ENCODE measurements at regions of chr3 and their contacts with region 1.

Region 1: GRCh38 chr3:187139126-187139894 is at the start of gene RPL39L:
- DNase-seq: peak; percentile 78 to 85
- ATAC-seq: peak; percentile 96 to 99 (median 98)
- H3K4me3 ChIP-seq: peak within 1 kb of the TSS; percentile 40 to 68 (median 62)
- H3K27ac ChIP-seq: peak within 1 kb of the TSS in 7 of 10 donors; percentile 21 to 73 (median 56)
- H3K4me1 ChIP-seq: peaks cover 0 to 18% (median 6%) of the 10 kb centered on the region in 9 donors
- H3K27me3 ChIP-seq: no peaks in the 10 kb centered on the region
- CTCF ChIP-seq: peak; percentile 78 to 93 (median 89)
- total RNA-seq, gene RPL39L: 3.5 to 7.4 (median 5.6) TPM

Region 2: GRCh38 chr3:186640473-186640818 is 498.9 kb before region 1 on chr3:
- intact Hi-C with region 1: loop called in 1 of 10 experiments (anchors 10 kb)
- DNase-seq: no peak
- ATAC-seq: peak in 5 of 8 donors; percentile 37 to 66 (median 48)
- H3K4me3 ChIP-seq: no peak overlapping the region
- H3K27ac ChIP-seq: no peak overlapping the region
- H3K4me1 ChIP-seq: peaks cover 0 to 19% (median 7%) of the 10 kb centered on the region in 9 donors
- H3K27me3 ChIP-seq: peaks cover 0 to 3% (median 0%) of the 10 kb centered on the region in 7 donors
- CTCF ChIP-seq: no peak

Region 3: DNA sequence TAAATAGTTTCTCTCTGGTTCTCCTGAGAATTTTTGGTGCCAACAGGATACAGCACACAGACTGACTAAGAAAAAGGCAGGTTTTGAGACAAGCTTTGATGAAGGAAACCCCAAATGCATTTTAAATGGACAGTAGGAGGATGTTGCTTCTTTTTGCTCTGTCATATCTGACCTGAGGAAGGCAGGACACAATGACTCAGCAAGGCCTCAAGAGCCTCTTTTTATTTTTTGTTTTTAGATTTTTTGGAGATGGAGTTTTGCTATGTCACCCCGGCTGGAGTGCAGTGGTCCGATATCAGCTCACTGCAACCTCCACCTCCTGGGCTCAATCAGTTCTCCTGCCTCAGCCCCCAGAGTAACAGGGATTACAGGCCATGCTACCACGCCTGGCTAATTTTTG is 439.0 kb before region 1 on chr3:
- intact Hi-C with region 1: no loop called
- DNase-seq: no peak
- ATAC-seq: no peak
- H3K4me3 ChIP-seq: no peak overlapping the region
- H3K27ac ChIP-seq: no peak overlapping the region
- H3K4me1 ChIP-seq: peaks cover 0 to 30% (median 0%) of the 10 kb centered on the region in 9 donors
- H3K27me3 ChIP-seq: no peaks in the 10 kb centered on the region
- CTCF ChIP-seq: no peak

Region 4: GRCh38 chr3:187072511-187072910 is 66.8 kb before region 1 on chr3:
- intact Hi-C with region 1: no loop called
- DNase-seq: no peak
- ATAC-seq: no peak
- H3K4me3 ChIP-seq: no peak overlapping the region
- H3K27ac ChIP-seq: no peak overlapping the region
- H3K4me1 ChIP-seq: no peaks in the 10 kb centered on the region
- H3K27me3 ChIP-seq: no peaks in the 10 kb centered on the region
- CTCF ChIP-seq: no peak

Region 5: DNA sequence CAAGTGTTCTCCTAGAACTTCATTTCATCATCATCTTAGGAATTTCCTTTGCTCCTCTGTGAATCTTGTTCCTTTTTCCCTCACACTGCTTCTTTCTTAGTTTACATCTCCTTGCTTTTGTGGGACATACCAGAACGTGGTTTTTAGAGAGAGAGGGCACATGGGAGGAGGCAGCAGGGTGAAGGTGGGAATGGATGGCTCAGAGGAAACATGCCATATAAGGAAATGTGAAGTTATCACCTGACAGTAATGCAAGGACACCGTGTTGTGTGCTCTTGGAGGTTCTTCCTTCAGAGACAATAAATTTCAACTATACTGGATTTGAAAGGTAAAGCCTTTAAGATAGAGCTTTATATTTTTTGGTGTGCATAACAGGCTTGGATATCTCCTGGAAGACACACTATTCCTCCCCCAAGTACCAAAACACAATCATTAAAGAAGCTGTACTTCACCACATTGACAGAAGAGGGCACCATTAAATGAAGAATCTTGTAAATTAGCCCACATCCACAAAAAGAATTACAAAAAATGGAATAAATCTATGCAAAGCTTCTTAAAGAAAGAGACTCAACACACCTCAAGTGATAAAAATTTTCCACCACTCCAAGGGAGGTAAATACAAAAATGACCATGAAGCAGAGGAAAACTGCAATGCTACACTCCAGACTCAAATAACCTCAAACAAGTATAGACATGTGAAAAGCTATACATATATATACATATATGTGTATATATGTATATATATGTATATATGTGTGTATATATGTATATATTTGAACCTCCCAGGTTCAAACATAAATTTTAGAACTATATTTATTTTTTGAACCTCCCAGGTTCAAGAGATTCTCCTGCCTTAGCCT is 26.1 kb before region 1 on chr3:
- intact Hi-C with region 1: loop called in 1 of 10 experiments (anchors 1 kb)
- DNase-seq: no peak
- ATAC-seq: no peak
- H3K4me3 ChIP-seq: no peak overlapping the region
- H3K27ac ChIP-seq: no peak overlapping the region
- H3K4me1 ChIP-seq: peaks cover 0 to 2% (median 0%) of the 10 kb centered on the region in 9 donors
- H3K27me3 ChIP-seq: no peaks in the 10 kb centered on the region
- CTCF ChIP-seq: peak; percentile 27 to 74 (median 63)